H1 (cell line): ENCODE measurements at regions of chr3 and their contacts with region 1.

Region 1: GRCh38 chr3:61936344-61936937 is 375.1 kb downstream of the PTPRG start:
- DNase-seq: peak in 1 of 2 experiments; percentile 73
- H3K4me3 ChIP-seq: no peak overlapping the region
- H3K27ac ChIP-seq: no peak overlapping the region
- H3K4me1 ChIP-seq: peaks cover 0 to 12% (median 6%) of the 10 kb centered on the region in 4 experiments; a peak in 6 of 7 replicates
- H3K27me3 ChIP-seq: no peaks in the 10 kb centered on the region
- CTCF ChIP-seq: peak; percentile 58 to 82 (median 74)
- EP300 ChIP-seq: no peak
- POLR2A ChIP-seq: no peak
- RAD21 ChIP-seq: peak; percentile 43 to 71; a peak in 3 of 4 replicates

Region 2: GRCh38 chr3:61858056-61858455 is 78.4 kb before region 1 on chr3:
- CTCF ChIA-PET with region 1: interaction called, 12 read pairs
- POLR2A ChIA-PET with region 1: no interaction called
- DNase-seq: no peak
- H3K4me3 ChIP-seq: no peak overlapping the region
- H3K27ac ChIP-seq: no peak overlapping the region
- H3K4me1 ChIP-seq: peaks cover 0 to 16% (median 1%) of the 10 kb centered on the region in 4 experiments; a peak in 5 of 7 replicates
- H3K27me3 ChIP-seq: no peaks in the 10 kb centered on the region
- CTCF ChIP-seq: no peak
- EP300 ChIP-seq: no peak
- POLR2A ChIP-seq: no peak
- RAD21 ChIP-seq: peak in 1 of 2 experiments; percentile 44; a peak in 3 of 4 replicates

Region 3: GRCh38 chr3:61903931-61904657 is 32.3 kb before region 1 on chr3:
- CTCF ChIA-PET with region 1: interaction called, 13 read pairs
- POLR2A ChIA-PET with region 1: interaction called, 3 read pairs
- DNase-seq: no peak
- H3K4me3 ChIP-seq: no peak overlapping the region
- H3K27ac ChIP-seq: no peak overlapping the region
- H3K4me1 ChIP-seq: peaks cover 6 to 29% (median 20%) of the 10 kb centered on the region in 4 experiments
- H3K27me3 ChIP-seq: no peaks in the 10 kb centered on the region
- CTCF ChIP-seq: no peak
- EP300 ChIP-seq: no peak
- POLR2A ChIP-seq: no peak
- RAD21 ChIP-seq: no peak

Region 4: DNA sequence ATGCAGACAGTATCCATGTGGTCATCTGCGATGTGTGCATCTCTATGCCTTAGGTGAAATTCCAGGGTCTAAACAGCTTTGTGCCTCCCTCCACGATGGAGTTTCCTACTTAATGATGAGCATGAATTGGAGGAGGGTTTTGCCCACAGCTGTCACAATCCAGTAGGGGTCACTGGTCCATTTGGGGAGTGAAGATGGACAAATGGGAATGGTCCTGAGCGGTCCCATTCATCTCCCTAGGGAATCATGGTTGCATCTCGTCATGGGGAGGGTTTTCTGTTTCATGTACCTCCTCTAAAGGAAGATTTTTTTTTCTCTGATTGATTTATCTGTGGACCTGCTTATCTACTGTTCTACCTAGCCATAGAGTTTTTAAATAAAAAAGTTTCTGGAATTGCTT is 17.0 kb before region 1 on chr3:
- CTCF ChIA-PET with region 1: interaction called, 27 read pairs
- POLR2A ChIA-PET with region 1: no interaction called
- DNase-seq: no peak
- H3K4me3 ChIP-seq: no peak overlapping the region
- H3K27ac ChIP-seq: no peak overlapping the region
- H3K4me1 ChIP-seq: peaks cover 0 to 25% (median 10%) of the 10 kb centered on the region in 4 experiments
- H3K27me3 ChIP-seq: no peaks in the 10 kb centered on the region
- CTCF ChIP-seq: peak; percentile 13 to 51 (median 23); a peak in 2 of 4 replicates
- EP300 ChIP-seq: no peak
- POLR2A ChIP-seq: no peak
- RAD21 ChIP-seq: peak; percentile 54 to 59; a peak in 3 of 4 replicates

Region 5: GRCh38 chr3:61947456-61947855 is 11.0 kb after region 1 on chr3:
- CTCF ChIA-PET with region 1: interaction called, 38 read pairs
- POLR2A ChIA-PET with region 1: no interaction called
- DNase-seq: no peak
- H3K4me3 ChIP-seq: peak overlapping the region in 1 of 4 experiments; percentile 34; a peak in 1 of 8 replicates
- H3K27ac ChIP-seq: no peak overlapping the region; the same call in 1 of the 2 replicates
- H3K4me1 ChIP-seq: peaks cover 9 to 47% (median 27%) of the 10 kb centered on the region in 4 experiments
- H3K27me3 ChIP-seq: no peaks in the 10 kb centered on the region
- CTCF ChIP-seq: no peak
- EP300 ChIP-seq: no peak
- POLR2A ChIP-seq: no peak
- RAD21 ChIP-seq: no peak

Region 6: GRCh38 chr3:62197350-62198012 is 261.0 kb after region 1 on chr3:
- CTCF ChIA-PET with region 1: no interaction called
- POLR2A ChIA-PET with region 1: no interaction called
- DNase-seq: no peak
- H3K4me3 ChIP-seq: no peak overlapping the region
- H3K27ac ChIP-seq: no peak overlapping the region
- H3K4me1 ChIP-seq: peaks cover 0 to 4% (median 2%) of the 10 kb centered on the region in 4 experiments; a peak in 3 of 7 replicates
- H3K27me3 ChIP-seq: no peaks in the 10 kb centered on the region
- CTCF ChIP-seq: no peak
- EP300 ChIP-seq: no peak
- POLR2A ChIP-seq: no peak
- RAD21 ChIP-seq: no peak